ENCODE measurements at regions of chr4 and their contacts with region 1.

Region 1: GRCh38 chr4:123396307-123397143 is at the start of gene SPRY1:
- DNase-seq: peak; percentile 40 to 88 (median 75)
- ATAC-seq: peak; percentile 58
- H3K4me3 ChIP-seq: peak within 1 kb of the TSS; percentile 54 to 66
- H3K4me3 Mint-ChIP-seq: peak within 1 kb of the TSS; percentile 83
- H3K27ac ChIP-seq: peak within 1 kb of the TSS; percentile 21 to 24
- H3K27ac Mint-ChIP-seq: peak within 1 kb of the TSS; percentile 85
- H3K4me1 ChIP-seq: peaks cover 9% of the 10 kb centered on the region
- H3K4me1 Mint-ChIP-seq: peaks cover 24% of the 10 kb centered on the region
- H3K27me3 ChIP-seq: peaks cover 0 to 3% of the 10 kb centered on the region in 2 experiments
- H3K27me3 Mint-ChIP-seq: no peaks in the 10 kb centered on the region
- CTCF ChIP-seq: no peak
- total RNA-seq, gene SPRY1: 65.8 to 66.1 TPM

Region 2: DNA sequence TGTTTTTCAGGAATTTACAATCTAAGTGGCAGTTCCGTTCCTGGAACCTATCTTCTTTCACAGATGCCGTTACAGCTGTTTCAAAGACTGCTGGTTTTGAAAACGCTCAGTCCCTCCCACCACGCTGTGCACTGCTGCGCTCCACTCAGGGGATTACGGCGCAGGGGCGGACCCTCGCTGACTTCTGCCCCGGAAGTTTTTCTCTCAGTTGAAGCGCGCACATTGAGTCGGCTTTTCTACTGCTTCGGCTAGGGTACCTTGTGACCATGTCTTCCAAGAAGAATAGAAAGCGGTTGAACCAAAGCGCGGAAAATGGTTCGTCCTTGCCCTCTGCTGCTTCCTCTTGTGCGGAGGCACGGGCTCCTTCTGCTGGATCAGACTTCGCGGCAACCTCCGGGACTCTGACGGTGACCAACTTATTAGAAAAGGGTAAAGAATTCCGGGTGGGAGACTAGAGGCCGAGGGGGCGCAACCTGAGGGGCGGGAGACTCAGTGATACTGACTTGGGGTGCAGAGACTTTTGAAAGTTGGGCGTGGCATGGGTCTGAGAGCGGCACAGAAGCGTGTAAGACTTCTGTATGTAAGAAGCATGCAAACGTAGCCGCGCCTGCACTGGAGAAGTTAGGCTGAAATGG is 473.5 kb before region 1 on chr4:
- CTCF ChIA-PET with region 1: no interaction called
- POLR2A ChIA-PET with region 1: no interaction called
- intact Hi-C with region 1: loop called (anchors 2 to 10 kb)
- DNase-seq: peak; percentile 72 to 92 (median 89)
- ATAC-seq: peak; percentile 98
- H3K4me3 ChIP-seq: peak overlapping the region; percentile 79 to 87
- H3K4me3 Mint-ChIP-seq: peak overlapping the region; percentile 99
- H3K27ac ChIP-seq: peak overlapping the region; percentile 62 to 74
- H3K27ac Mint-ChIP-seq: peak overlapping the region; percentile 96
- H3K4me1 ChIP-seq: peaks cover 20% of the 10 kb centered on the region
- H3K4me1 Mint-ChIP-seq: peaks cover 17% of the 10 kb centered on the region
- H3K27me3 ChIP-seq: no peaks in the 10 kb centered on the region
- H3K27me3 Mint-ChIP-seq: no peaks in the 10 kb centered on the region
- CTCF ChIP-seq: no peak

Region 3: DNA sequence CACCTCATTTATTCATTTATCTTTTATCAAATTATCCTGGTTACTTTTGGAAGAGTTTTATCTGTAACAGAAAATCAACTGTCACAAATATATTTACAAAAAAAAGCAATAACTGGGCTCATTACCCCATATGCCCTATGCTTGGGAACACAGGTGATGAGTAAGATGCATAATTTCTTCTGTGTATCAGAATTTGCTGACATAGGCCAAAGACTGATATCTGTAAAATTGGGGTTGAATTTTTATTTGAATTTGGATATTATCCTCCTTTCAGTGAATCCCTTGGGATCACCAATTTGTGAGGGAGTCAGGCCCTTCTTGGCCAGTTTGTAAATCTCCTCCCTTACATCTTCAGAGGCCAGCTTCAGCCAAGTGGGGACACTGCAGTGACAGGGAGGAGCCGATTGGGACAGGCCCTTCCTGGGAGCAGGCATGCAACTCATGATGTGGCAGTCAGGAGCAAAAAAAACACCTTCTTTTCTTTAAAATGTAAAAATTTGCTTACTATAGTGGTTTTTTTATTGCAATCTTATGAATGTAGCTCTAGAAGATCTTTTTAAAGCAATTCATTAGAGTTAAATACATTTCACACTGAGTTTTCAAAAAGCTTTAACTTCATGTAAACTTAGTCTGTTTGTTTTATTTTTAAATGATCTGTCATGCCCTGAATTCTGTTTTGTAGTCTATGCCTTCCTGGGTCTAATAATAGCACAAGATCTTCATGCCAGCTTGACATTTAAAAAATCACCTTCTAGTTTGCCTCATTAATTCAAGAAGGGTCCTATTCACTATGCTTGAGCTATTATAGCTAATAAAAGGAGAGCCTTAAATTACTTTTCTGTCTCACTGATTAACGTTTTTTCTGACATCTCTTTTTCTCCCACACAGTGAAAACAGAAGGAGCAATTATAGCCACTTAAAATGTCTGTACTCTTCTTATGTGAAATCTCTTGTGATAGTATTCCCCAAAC is 136.6 kb before region 1 on chr4:
- CTCF ChIA-PET with region 1: no interaction called
- POLR2A ChIA-PET with region 1: no interaction called
- intact Hi-C with region 1: no loop called
- DNase-seq: no peak
- ATAC-seq: no peak
- H3K4me3 ChIP-seq: no peak overlapping the region
- H3K4me3 Mint-ChIP-seq: no peak overlapping the region
- H3K27ac ChIP-seq: no peak overlapping the region
- H3K27ac Mint-ChIP-seq: no peak overlapping the region
- H3K4me1 ChIP-seq: no peaks in the 10 kb centered on the region
- H3K4me1 Mint-ChIP-seq: peaks cover 2% of the 10 kb centered on the region
- H3K27me3 ChIP-seq: no peaks in the 10 kb centered on the region
- H3K27me3 Mint-ChIP-seq: no peaks in the 10 kb centered on the region
- CTCF ChIP-seq: no peak

Region 4: GRCh38 chr4:123444290-123444731 is 47.8 kb after region 1 on chr4:
- CTCF ChIA-PET with region 1: interaction called, 3 read pairs
- POLR2A ChIA-PET with region 1: interaction called, 3 read pairs
- intact Hi-C with region 1: loop called (anchors 1 to 2 kb)
- DNase-seq: peak in 8 of 9 experiments; percentile 5 to 67 (median 42)
- ATAC-seq: peak; percentile 88
- H3K4me3 ChIP-seq: peak overlapping the region in 1 of 2 experiments; percentile 26
- H3K4me3 Mint-ChIP-seq: peak overlapping the region; percentile 79
- H3K27ac ChIP-seq: peak overlapping the region in 1 of 2 experiments; percentile 30
- H3K27ac Mint-ChIP-seq: peak overlapping the region; percentile 95
- H3K4me1 ChIP-seq: peaks cover 14% of the 10 kb centered on the region
- H3K4me1 Mint-ChIP-seq: peaks cover 25% of the 10 kb centered on the region
- H3K27me3 ChIP-seq: no peaks in the 10 kb centered on the region
- H3K27me3 Mint-ChIP-seq: no peaks in the 10 kb centered on the region
- CTCF ChIP-seq: no peak

Region 5: GRCh38 chr4:123505095-123506010 is 108.8 kb after region 1 on chr4:
- CTCF ChIA-PET with region 1: no interaction called
- POLR2A ChIA-PET with region 1: interaction called, 3 read pairs
- intact Hi-C with region 1: loop called in 1 of 2 experiments (anchors 5 kb)
- DNase-seq: peak in 6 of 9 experiments; percentile 11 to 54 (median 22)
- ATAC-seq: peak; percentile 44
- H3K4me3 ChIP-seq: peak overlapping the region; percentile 51 to 55
- H3K4me3 Mint-ChIP-seq: peak overlapping the region; percentile 95
- H3K27ac ChIP-seq: no peak overlapping the region
- H3K27ac Mint-ChIP-seq: peak overlapping the region; percentile 84
- H3K4me1 ChIP-seq: peaks cover 7% of the 10 kb centered on the region
- H3K4me1 Mint-ChIP-seq: peaks cover 20% of the 10 kb centered on the region
- H3K27me3 ChIP-seq: no peaks in the 10 kb centered on the region
- H3K27me3 Mint-ChIP-seq: peaks cover 9% of the 10 kb centered on the region
- CTCF ChIP-seq: no peak

Region 6: DNA sequence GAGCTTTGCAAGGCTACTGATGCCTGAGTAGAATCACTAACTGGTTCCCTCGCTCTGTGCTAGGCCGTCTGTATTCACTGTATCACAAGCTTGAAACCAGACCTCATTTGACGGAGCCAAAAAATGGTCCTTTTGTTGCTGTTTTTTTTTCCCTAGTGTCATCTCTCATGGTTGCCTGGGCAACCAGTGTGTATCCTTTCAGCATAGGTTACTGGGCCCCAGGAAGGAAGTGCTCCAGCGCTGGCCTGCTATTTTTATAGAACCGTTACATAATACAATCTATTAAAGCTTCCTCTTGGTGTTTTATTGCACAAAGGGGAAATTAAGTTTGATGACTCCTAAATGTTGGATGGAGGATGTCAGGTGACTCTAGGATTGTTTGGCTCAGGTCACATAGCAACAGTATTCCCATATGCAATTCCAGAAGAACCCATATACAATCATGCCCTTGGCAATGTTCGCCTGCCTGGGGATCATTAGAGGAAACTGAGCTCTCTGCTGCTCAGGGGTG is 220.5 kb after region 1 on chr4:
- CTCF ChIA-PET with region 1: interaction called, 3 read pairs
- POLR2A ChIA-PET with region 1: interaction called, 3 read pairs
- intact Hi-C with region 1: loop called in 1 of 2 experiments (anchors 1 kb)
- DNase-seq: peak; percentile 1 to 91 (median 49)
- ATAC-seq: peak; percentile 93
- H3K4me3 ChIP-seq: no peak overlapping the region
- H3K4me3 Mint-ChIP-seq: peak overlapping the region; percentile 23
- H3K27ac ChIP-seq: peak overlapping the region; percentile 31 to 59
- H3K27ac Mint-ChIP-seq: peak overlapping the region; percentile 87
- H3K4me1 ChIP-seq: peaks cover 16% of the 10 kb centered on the region
- H3K4me1 Mint-ChIP-seq: peaks cover 24% of the 10 kb centered on the region
- H3K27me3 ChIP-seq: no peaks in the 10 kb centered on the region
- H3K27me3 Mint-ChIP-seq: no peaks in the 10 kb centered on the region
- CTCF ChIP-seq: no peak

Region 7: GRCh38 chr4:123869286-123870060 is 472.9 kb after region 1 on chr4:
- CTCF ChIA-PET with region 1: no interaction called
- POLR2A ChIA-PET with region 1: no interaction called
- intact Hi-C with region 1: no loop called
- DNase-seq: no peak
- ATAC-seq: no peak
- H3K4me3 ChIP-seq: no peak overlapping the region
- H3K4me3 Mint-ChIP-seq: no peak overlapping the region
- H3K27ac ChIP-seq: no peak overlapping the region
- H3K27ac Mint-ChIP-seq: no peak overlapping the region
- H3K4me1 ChIP-seq: no peaks in the 10 kb centered on the region
- H3K4me1 Mint-ChIP-seq: no peaks in the 10 kb centered on the region
- H3K27me3 ChIP-seq: no peaks in the 10 kb centered on the region
- H3K27me3 Mint-ChIP-seq: no peaks in the 10 kb centered on the region
- CTCF ChIP-seq: no peak

Measured in CD8-positive, alpha-beta T cell (primary cell).